ENCODE measurements at regions of chr5 and their contacts with region 1.

Region 1: GRCh38 chr5:132238169-132238744 is 10.6 kb upstream of the P4HA2 start:
- DNase-seq: peak; percentile 69 to 71
- ATAC-seq: peak; percentile 83 to 96
- H3K4me3 ChIP-seq: no peak overlapping the region
- H3K27ac ChIP-seq: 0 out of 6 replicates have a peak overlapping the region, but pooled peaks of 1 of the 2 experiments have one; percentile 20
- H3K4me1 ChIP-seq: no peaks in the 10 kb centered on the region
- CTCF ChIP-seq: peak; percentile 67
- EP300 ChIP-seq: no peak
- POLR2A ChIP-seq: no peak
- RAD21 ChIP-seq: peak; percentile 71 to 73

Region 2: DNA sequence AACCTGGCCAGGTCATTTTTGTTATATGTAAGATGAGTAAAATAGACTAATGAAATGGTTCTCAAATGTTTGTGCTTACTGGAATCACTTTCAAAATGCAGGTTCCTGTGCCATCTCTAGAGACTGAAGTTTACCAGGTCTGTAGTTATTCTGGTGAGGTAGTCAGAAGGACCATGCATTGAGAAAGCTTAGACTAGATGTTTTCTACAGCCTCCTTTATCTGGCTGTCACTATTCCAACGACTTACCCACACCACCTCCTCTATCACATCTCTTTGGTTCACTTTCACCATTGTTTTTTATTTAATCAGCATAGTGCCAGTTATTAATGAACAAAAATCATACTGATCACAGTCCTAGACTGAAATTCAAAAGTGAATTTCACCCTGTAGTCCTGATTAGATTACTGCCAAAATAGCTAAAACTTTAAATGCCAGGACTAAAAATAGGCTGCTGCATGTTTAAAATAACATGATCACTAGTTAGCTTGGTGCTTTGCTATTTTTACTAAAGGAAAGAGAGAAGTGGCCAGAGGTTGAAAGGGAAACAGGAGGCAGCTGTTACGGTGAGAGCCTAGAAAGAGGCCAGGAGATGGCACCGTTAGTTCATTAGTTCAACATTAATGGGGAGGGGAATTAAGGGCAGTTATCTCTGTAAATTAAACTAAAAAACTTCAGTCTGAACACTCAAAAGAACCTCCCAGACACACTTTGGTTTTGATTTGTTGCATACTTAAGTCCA is 427.6 kb before region 1 on chr5:
- CTCF ChIA-PET with region 1: no interaction called
- POLR2A ChIA-PET with region 1: no interaction called
- DNase-seq: peak in 1 of 2 experiments; percentile 11
- ATAC-seq: peak in 1 of 2 experiments; percentile 66; a peak in 3 of 6 replicates
- H3K4me3 ChIP-seq: no peak overlapping the region
- H3K27ac ChIP-seq: no peak overlapping the region
- H3K4me1 ChIP-seq: peaks cover 5% of the 10 kb centered on the region; the same call in 1 of the 3 replicates
- CTCF ChIP-seq: peak; percentile 30; the same call in 2 of the 3 replicates
- EP300 ChIP-seq: no peak
- POLR2A ChIP-seq: no peak
- RAD21 ChIP-seq: peak; percentile 38 to 57; a peak in 3 of 5 replicates

Region 3: DNA sequence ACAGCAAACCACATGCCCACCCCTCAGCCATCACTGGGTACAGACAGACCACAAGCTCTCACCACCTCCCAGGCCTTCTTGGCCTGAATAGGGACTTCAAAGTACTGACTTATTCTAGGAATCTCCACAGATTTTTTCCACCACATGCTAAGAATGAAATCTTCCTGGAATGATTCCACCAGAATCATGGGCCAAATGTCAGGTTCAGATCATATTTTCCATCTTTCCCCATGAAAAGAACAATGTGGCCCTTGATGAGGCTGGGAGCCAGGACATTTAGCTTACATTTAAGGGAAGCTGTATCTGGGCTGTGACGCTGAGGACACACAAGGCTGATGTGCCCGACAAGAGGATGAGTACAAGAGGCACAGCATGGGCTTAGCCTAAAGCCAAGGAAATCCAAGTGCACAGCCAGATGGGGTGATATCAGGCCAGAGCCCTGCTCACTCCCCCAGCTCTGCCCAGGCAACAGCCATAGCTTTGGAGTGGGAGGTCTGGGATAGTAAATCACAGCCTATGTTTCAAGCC is 254.9 kb before region 1 on chr5:
- CTCF ChIA-PET with region 1: no interaction called
- POLR2A ChIA-PET with region 1: no interaction called
- DNase-seq: no peak
- ATAC-seq: no peak
- H3K4me3 ChIP-seq: no peak overlapping the region
- H3K27ac ChIP-seq: no peak overlapping the region
- H3K4me1 ChIP-seq: no peaks in the 10 kb centered on the region
- CTCF ChIP-seq: no peak
- EP300 ChIP-seq: no peak
- POLR2A ChIP-seq: no peak
- RAD21 ChIP-seq: no peak

Region 4: GRCh38 chr5:132251220-132251725 is 13.0 kb after region 1 on chr5:
- CTCF ChIA-PET with region 1: interaction called, 42 read pairs
- POLR2A ChIA-PET with region 1: no interaction called
- DNase-seq: no peak
- ATAC-seq: peak in 1 of 2 experiments; percentile 53; a peak in 3 of 6 replicates
- H3K4me3 ChIP-seq: no peak overlapping the region
- H3K27ac ChIP-seq: no peak overlapping the region
- H3K4me1 ChIP-seq: peaks cover 8% of the 10 kb centered on the region; the same call in 2 of the 3 replicates
- CTCF ChIP-seq: no peak
- EP300 ChIP-seq: no peak
- POLR2A ChIP-seq: no peak
- RAD21 ChIP-seq: no peak

Region 5: GRCh38 chr5:132272311-132273210 is 34.3 kb after region 1 on chr5:
- CTCF ChIA-PET with region 1: interaction called, 27 read pairs
- POLR2A ChIA-PET with region 1: no interaction called
- DNase-seq: peak; percentile 58 to 75
- ATAC-seq: peak; percentile 69 to 83; a peak in 5 of 6 replicates
- H3K4me3 ChIP-seq: no peak overlapping the region
- H3K27ac ChIP-seq: peak overlapping the region; percentile 46 to 78; a peak in 5 of 6 replicates
- H3K4me1 ChIP-seq: peaks cover 7% of the 10 kb centered on the region; the same call in 1 of the 3 replicates
- CTCF ChIP-seq: peak; percentile 85
- EP300 ChIP-seq: no peak
- POLR2A ChIP-seq: no peak
- RAD21 ChIP-seq: peak; percentile 70 to 75

Region 6: GRCh38 chr5:132293066-132293991 is 55.1 kb after region 1 on chr5:
- CTCF ChIA-PET with region 1: interaction called, 19 read pairs
- POLR2A ChIA-PET with region 1: interaction called, 18 read pairs
- DNase-seq: peak; percentile 91
- ATAC-seq: peak; percentile 67 to 74
- H3K4me3 ChIP-seq: peak overlapping the region; percentile 65
- H3K27ac ChIP-seq: peak overlapping the region; percentile 95 to 99
- H3K4me1 ChIP-seq: peaks cover 30% of the 10 kb centered on the region
- CTCF ChIP-seq: peak; percentile 20; the same call in 1 of the 3 replicates
- EP300 ChIP-seq: 0 out of 5 replicates have a peak, but pooled peaks of 1 of the 2 experiments have one; percentile 14
- POLR2A ChIP-seq: peak; percentile 94
- RAD21 ChIP-seq: no peak

Region 7: GRCh38 chr5:132500931-132501630 is 262.8 kb after region 1 on chr5:
- CTCF ChIA-PET with region 1: interaction called, 14 read pairs
- POLR2A ChIA-PET with region 1: no interaction called
- DNase-seq: peak; percentile 51 to 71
- ATAC-seq: peak in 1 of 2 experiments; percentile 29; a peak in 3 of 6 replicates
- H3K4me3 ChIP-seq: no peak overlapping the region
- H3K27ac ChIP-seq: peak overlapping the region; percentile 37 to 97; a peak in 4 of 6 replicates
- H3K4me1 ChIP-seq: peaks cover 41% of the 10 kb centered on the region
- CTCF ChIP-seq: peak; percentile 89
- EP300 ChIP-seq: no peak
- POLR2A ChIP-seq: no peak
- RAD21 ChIP-seq: peak; percentile 94 to 96